ENCODE measurements at regions of chr13 and their contacts with region 1.

Region 1: GRCh38 chr13:99566125-99567083 is 65.1 kb downstream of the TM9SF2 start:
- DNase-seq: no peak

Region 2: DNA sequence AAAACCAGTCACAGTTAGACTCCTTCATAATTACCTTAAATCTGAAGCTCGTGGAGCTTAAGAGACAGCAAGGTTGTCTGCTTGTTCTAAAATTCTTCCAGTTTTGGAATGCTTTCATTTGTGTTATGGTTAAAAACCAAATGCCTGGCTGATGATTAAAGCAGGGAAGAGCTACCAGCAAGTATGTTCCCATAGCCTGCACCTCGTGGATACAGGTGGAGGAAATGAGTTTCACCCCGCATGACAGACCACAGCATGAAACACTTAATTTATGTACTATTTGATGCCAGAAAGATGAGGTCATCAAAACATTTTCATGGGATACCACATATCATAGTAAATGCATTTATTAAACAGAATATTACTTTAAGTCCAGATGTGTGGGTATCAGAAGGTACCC is 588.1 kb before region 1 on chr13:
- intact Hi-C with region 1: no loop called
- DNase-seq: no peak

Region 3: GRCh38 chr13:99133230-99133629 is 433.2 kb before region 1 on chr13:
- intact Hi-C with region 1: no loop called
- DNase-seq: no peak

Region 4: DNA sequence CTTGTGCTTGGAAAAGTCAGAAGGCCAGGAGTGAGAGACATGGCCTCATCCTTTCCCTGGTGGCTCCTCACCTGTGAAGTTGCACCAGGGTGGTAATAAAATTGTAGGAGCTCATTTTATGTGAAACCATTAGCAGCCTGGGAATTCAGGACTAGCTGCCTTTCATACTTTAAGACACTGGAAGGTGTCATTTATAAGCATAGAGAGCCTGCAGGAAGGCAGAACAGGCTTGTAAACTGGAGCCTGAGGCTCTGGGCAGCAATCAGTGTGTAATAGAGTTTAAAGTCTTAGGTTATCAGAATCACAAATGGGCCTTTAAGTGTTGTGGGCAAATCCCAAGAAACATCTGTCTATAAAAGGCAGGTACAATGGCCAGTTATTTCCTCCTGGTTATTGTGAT is 62.0 kb after region 1 on chr13:
- intact Hi-C with region 1: loop called in 1 of 2 experiments (anchors 2 kb)
- DNase-seq: no peak